PC-3 (cell line): ENCODE measurements at regions of chr11 and their contacts with region 1.

Region 1: GRCh38 chr11:62048065-62048464 is 75.7 kb upstream of the INCENP start:
- DNase-seq: peak; percentile 61
- ATAC-seq: peak; percentile 31
- H3K4me3 ChIP-seq: no peak overlapping the region
- H3K27ac ChIP-seq: peak overlapping the region; percentile 97
- H3K4me1 ChIP-seq: peaks cover 73% of the 10 kb centered on the region
- H3K27me3 ChIP-seq: no peaks in the 10 kb centered on the region
- CTCF ChIP-seq: no peak

Region 2: DNA sequence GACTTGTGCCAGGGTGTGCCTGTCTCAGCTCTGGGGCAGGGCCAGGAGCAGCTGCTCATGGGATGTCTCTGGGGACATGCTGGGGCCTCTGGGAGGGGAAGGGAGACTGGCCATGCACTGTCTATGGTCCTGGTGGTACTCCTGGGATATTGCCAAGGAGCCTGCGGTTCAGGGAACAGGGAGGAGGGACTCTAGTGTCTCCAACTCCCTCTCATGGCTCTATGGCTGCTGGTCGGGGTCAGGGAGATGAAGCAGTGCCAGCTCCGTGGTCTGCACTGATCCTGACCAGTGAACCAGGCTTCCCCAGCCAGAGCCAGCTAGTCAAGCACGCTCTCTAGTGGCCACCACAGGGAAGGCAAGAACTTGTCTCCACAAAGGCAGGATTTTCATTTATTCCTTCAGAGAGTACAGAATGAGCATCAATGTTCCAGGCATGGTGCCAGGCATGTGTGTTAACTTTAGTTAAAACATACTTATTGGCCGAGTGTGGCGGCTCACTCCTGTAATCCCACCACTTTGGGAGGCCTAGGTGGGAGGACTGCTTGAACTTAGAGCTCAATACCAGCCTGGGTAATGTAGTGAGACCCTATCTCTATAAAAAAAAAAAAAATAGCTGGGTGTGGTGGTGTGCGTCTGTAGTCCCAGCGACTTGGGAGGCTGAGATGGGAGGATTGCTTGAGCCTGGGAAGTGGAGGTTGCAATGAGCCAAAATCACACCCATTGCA is 100.4 kb before region 1 on chr11:
- CTCF ChIA-PET with region 1: no interaction called
- POLR2A ChIA-PET with region 1: no interaction called
- intact Hi-C with region 1: no loop called
- DNase-seq: peak; percentile 92
- ATAC-seq: peak; percentile 85
- H3K4me3 ChIP-seq: no peak overlapping the region
- H3K27ac ChIP-seq: no peak overlapping the region
- H3K4me1 ChIP-seq: peaks cover 7% of the 10 kb centered on the region; the same call in 1 of the 2 replicates
- H3K27me3 ChIP-seq: no peaks in the 10 kb centered on the region
- CTCF ChIP-seq: peak; percentile 97

Region 3: DNA sequence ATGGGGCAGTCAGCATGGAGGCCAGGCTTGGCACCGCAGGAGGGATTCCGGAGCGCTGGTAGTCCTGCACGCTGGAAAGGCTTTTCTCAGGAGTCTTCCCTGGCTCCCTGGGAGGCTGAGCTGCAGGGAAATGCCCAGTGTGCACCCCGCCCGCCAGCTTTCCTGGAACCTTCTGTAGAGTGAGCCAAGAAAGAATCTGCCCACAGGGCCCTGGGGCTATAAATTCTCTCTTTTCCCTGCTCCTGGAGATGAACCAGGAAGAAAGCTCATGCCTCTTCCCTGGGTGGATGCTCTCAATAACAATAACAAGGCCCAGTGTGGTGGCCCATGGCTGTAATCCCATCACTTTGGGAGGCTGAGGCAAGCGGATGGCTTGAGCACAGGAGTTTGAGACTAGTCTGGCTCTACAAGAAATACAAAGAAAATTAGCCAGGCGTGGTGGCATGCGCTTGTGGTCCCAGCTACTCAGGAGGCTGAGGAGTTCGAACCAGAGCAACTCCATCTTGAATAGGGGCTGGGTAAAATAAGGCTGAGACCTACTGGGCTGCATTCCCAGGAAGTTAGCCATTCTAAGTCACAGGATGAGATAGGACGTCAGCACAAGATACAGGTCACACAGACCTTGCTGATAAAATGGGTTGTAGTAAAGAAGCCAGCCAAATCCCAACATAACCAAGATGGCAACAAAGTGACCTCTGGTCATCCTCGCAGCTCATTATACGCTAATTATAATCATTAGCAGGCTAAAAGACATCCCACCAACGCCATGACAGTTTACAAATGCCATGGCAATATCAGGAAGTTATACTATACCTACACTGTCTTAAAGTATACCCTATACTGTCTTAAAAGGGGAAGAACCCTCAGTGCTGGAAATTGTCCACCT is 34.2 kb before region 1 on chr11:
- CTCF ChIA-PET with region 1: no interaction called
- POLR2A ChIA-PET with region 1: interaction called, 4 read pairs
- intact Hi-C with region 1: loop called (anchors 2 kb)
- DNase-seq: peak; percentile 85
- ATAC-seq: peak; percentile 53
- H3K4me3 ChIP-seq: peak overlapping the region; percentile 31
- H3K27ac ChIP-seq: peak overlapping the region; percentile 94
- H3K4me1 ChIP-seq: peaks cover 28% of the 10 kb centered on the region
- H3K27me3 ChIP-seq: no peaks in the 10 kb centered on the region
- CTCF ChIP-seq: no peak

Region 4: GRCh38 chr11:62025487-62026105 is 22.5 kb before region 1 on chr11:
- CTCF ChIA-PET with region 1: no interaction called
- POLR2A ChIA-PET with region 1: no interaction called
- intact Hi-C with region 1: loop called (anchors 1 kb)
- DNase-seq: peak; percentile 92
- ATAC-seq: peak; percentile 97
- H3K4me3 ChIP-seq: peak overlapping the region; percentile 16; the same call in 1 of the 2 replicates
- H3K27ac ChIP-seq: peak overlapping the region; percentile 80
- H3K4me1 ChIP-seq: peaks cover 21% of the 10 kb centered on the region
- H3K27me3 ChIP-seq: no peaks in the 10 kb centered on the region
- CTCF ChIP-seq: no peak

Region 5: GRCh38 chr11:62033191-62034044 is 14.6 kb before region 1 on chr11:
- CTCF ChIA-PET with region 1: no interaction called
- POLR2A ChIA-PET with region 1: interaction called, 15 read pairs
- intact Hi-C with region 1: no loop called
- DNase-seq: peak; percentile 93
- ATAC-seq: peak; percentile 94
- H3K4me3 ChIP-seq: no peak overlapping the region
- H3K27ac ChIP-seq: peak overlapping the region; percentile 78
- H3K4me1 ChIP-seq: peaks cover 17% of the 10 kb centered on the region
- H3K27me3 ChIP-seq: no peaks in the 10 kb centered on the region
- CTCF ChIP-seq: no peak

Region 6: DNA sequence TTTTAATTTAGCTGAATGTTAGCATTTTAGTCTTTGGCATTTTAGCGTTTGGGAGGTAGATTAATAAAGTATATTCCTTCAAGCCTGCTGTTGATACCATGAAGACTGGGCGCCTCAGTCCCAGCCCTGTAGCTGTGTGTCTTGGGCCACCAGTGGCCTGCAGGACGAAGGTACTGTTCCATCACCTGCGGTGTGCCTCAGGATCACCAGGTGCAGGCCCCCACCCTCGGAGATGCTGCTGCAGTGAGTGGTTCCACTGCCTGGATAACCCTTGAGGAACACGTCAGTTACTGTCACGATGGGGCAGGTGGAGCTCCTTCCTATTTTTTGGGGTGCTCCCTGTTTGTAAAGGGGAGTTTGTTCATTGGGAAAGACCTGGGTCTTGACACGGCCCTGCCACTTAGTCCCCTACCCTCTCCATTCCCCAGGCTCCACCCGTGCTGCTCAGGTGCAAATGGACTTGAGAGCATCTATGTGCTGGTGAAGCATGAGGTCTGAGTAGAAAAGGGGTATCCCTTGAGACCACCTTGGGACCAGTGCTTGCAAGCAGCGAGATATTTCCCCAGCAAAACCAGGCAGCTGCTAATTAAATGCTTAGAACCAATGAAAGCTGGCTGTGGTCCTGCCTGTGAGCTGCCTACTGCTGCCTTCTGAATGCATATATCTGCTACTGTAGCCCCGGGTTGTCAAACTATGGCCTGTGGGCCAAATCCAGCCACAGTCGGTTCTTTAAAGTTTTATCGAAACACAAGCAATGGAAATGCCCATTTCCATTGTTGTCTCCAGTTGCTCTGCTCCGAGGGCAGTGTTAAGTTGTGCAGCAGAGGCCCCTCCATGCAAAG is 104.4 kb after region 1 on chr11:
- CTCF ChIA-PET with region 1: no interaction called
- POLR2A ChIA-PET with region 1: no interaction called
- intact Hi-C with region 1: no loop called
- DNase-seq: no peak
- ATAC-seq: no peak
- H3K4me3 ChIP-seq: no peak overlapping the region
- H3K27ac ChIP-seq: no peak overlapping the region
- H3K4me1 ChIP-seq: no peaks in the 10 kb centered on the region
- H3K27me3 ChIP-seq: no peaks in the 10 kb centered on the region
- CTCF ChIP-seq: no peak